ENCODE measurements at regions of chr16 and their contacts with region 1.

Region 1: GRCh38 chr16:15949210-15950160 is at the start of gene ABCC1:
- DNase-seq: peak; percentile 52 to 69
- ATAC-seq: peak; percentile 78 to 81 (median 79)
- H3K4me3 ChIP-seq: peak within 1 kb of the TSS; percentile 83
- H3K27ac ChIP-seq: peak within 1 kb of the TSS; percentile 83
- H3K4me1 ChIP-seq: peaks cover 27% of the 10 kb centered on the region
- H3K27me3 ChIP-seq: no peaks in the 10 kb centered on the region
- CTCF ChIP-seq: no peak
- total RNA-seq, gene ABCC1: 19.5 to 36.5 (median 30.3) TPM

Region 2: DNA sequence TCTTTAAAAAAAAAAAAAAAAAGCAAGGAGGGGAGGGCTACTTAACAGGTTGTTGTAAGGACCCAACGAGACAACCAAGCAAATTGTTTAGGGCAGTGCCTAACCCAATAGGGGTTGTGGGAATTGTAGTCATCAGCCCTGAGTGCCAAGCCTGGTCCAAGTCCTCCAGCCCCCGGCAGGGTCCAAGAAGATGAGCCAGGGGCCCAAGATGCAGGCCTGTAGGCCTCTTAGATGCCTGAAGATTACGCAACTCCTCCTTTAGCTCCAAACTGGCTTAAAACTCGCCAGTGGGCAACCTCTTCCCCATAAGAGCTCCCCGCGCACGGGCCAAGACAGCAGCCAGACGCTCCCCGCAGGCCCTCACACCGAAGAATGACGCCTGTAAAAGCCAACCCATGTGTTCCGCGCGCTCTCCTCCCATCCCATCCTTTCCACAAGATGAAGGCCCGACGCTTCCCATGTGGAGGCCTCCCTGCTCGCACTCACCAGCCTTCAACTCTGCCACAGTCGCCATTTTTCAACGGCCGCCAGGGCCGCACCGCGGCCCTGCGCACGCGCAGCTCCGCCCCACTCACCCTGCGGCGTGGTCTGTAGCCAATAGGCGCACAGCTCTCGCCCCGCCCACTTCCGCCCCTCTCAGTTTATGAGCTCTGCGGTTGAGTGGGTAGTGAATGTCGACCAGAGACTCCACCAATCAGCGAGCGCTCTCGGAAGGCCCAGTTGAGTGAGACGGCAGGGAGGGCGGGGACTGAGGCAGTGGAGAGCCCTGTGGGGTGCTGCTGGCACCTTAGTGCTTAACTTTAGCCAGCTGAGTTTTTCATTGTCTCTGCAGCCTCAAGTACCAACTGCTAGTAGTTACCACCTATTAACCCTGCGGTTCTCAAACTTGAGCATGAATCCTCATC is 61.2 kb before region 1 on chr16 and contains the start of gene CEP20:
- intact Hi-C with region 1: loop called (anchors 5 kb)
- DNase-seq: peak; percentile 100
- ATAC-seq: peak; percentile 99 to 100 (median 100)
- H3K4me3 ChIP-seq: peak within 1 kb of the TSS; percentile 95
- H3K27ac ChIP-seq: peak within 1 kb of the TSS; percentile 97
- H3K4me1 ChIP-seq: peaks cover 37% of the 10 kb centered on the region
- H3K27me3 ChIP-seq: no peaks in the 10 kb centered on the region
- CTCF ChIP-seq: no peak
- total RNA-seq, gene CEP20: 38.1 to 67.1 (median 56.0) TPM

Region 3: GRCh38 chr16:15894571-15895374 is 54.7 kb before region 1 on chr16:
- intact Hi-C with region 1: loop called (anchors 5 kb)
- DNase-seq: no peak
- ATAC-seq: no peak
- H3K4me3 ChIP-seq: no peak overlapping the region
- H3K27ac ChIP-seq: no peak overlapping the region
- H3K4me1 ChIP-seq: no peaks in the 10 kb centered on the region
- H3K27me3 ChIP-seq: no peaks in the 10 kb centered on the region
- CTCF ChIP-seq: no peak

Region 4: DNA sequence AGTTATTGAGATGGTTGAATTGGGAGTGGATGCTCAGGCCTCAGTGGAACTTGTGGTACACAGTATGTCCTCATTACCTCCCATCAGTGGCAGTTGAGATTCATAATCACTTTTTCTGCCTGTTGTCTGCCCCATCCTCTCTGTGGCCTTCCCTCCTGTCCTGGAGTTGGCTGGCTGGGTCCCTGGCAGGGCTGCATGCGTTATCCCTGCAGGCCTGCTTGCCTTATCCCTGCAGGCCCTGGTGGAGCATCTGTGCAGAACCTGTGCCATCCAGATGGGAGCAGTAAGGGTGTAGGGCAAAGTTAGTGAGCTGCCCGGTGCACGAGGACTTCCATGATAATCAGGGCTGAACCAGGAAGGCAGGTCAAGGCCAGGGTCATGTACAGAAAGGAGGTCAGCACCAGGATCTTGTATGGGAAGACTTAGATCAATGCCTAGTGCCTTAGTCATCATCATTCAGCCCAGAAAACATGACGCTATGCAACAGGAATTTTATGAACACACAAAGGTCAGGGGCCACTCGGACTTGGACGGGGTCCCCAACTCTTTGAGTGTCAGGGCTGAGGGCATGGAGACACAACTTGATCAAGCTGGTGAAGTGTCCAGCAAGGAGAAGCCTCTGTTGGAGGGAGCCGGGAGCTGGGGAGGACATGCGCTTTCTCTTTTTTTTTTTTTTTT is 47.1 kb after region 1 on chr16:
- intact Hi-C with region 1: loop called in 1 of 2 experiments (anchors 5 kb)
- DNase-seq: peak; percentile 70 to 80
- ATAC-seq: peak; percentile 66 to 78 (median 76)
- H3K4me3 ChIP-seq: no peak overlapping the region
- H3K27ac ChIP-seq: peak overlapping the region; percentile 82
- H3K4me1 ChIP-seq: peaks cover 54% of the 10 kb centered on the region
- H3K27me3 ChIP-seq: no peaks in the 10 kb centered on the region
- CTCF ChIP-seq: no peak

Region 5: GRCh38 chr16:16021988-16022682 is 72.7 kb after region 1 on chr16:
- intact Hi-C with region 1: loop called in 1 of 2 experiments (anchors 10 kb)
- DNase-seq: peak; percentile 99
- ATAC-seq: peak; percentile 97 to 99 (median 98)
- H3K4me3 ChIP-seq: peak overlapping the region; percentile 35
- H3K27ac ChIP-seq: peak overlapping the region; percentile 84
- H3K4me1 ChIP-seq: peaks cover 45% of the 10 kb centered on the region
- H3K27me3 ChIP-seq: no peaks in the 10 kb centered on the region
- CTCF ChIP-seq: no peak

Region 6: GRCh38 chr16:16075488-16076422 is 126.3 kb after region 1 on chr16:
- intact Hi-C with region 1: loop called in 1 of 2 experiments (anchors 2 kb)
- DNase-seq: peak; percentile 66 to 84
- ATAC-seq: peak; percentile 74 to 82 (median 74)
- H3K4me3 ChIP-seq: no peak overlapping the region
- H3K27ac ChIP-seq: peak overlapping the region; percentile 80
- H3K4me1 ChIP-seq: peaks cover 46% of the 10 kb centered on the region
- H3K27me3 ChIP-seq: no peaks in the 10 kb centered on the region
- CTCF ChIP-seq: no peak